ENCODE measurements at regions of chr7 and their contacts with region 1.

Region 1: GRCh38 chr7:5237286-5237685 is 45.5 kb upstream of the SLC29A4 start:
- DNase-seq: no peak
- ATAC-seq: no peak
- H3K4me3 ChIP-seq: no peak overlapping the region
- H3K27ac ChIP-seq: no peak overlapping the region
- H3K4me1 ChIP-seq: peaks cover 9% of the 10 kb centered on the region
- H3K27me3 ChIP-seq: no peaks in the 10 kb centered on the region
- CTCF ChIP-seq: no peak

Region 2: DNA sequence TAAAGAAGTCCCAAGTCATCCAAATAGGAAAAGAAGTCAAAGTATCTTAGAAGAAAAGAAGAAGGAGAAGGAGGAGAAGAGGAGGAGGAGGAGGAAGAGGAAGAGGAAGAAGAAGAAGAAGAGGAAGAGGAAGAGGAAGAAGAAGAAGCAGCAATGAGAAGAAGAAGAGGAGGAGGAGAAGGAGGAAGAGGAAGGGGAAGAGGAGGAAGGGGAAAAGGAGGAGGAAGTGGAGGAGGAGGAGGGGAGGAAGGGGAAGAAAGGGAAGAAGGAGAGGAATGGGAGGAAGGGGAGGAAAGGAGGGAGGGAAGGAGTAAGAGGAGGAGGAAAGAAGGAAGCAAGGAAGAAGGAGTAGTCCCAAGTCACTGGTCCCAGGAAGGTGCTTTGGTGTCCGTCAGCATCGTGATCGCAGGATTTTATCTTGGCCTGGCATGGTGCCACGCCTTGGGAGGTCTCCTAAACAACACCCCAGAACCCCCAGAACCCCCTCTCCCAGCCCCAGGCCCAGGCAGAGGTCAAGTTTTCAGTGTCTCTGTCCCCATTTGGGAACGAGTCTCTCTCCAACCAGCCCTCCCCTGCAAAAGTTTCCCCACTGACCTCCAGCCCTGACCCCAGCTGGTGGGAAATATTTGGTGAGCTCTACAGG is 332.0 kb before region 1 on chr7:
- CTCF ChIA-PET with region 1: no interaction called
- POLR2A ChIA-PET with region 1: no interaction called
- intact Hi-C with region 1: no loop called
- DNase-seq: no peak
- ATAC-seq: no peak
- H3K4me3 ChIP-seq: no peak overlapping the region
- H3K27ac ChIP-seq: no peak overlapping the region
- H3K4me1 ChIP-seq: no peaks in the 10 kb centered on the region
- H3K27me3 ChIP-seq: peaks cover 10% of the 10 kb centered on the region
- CTCF ChIP-seq: no peak

Region 3: DNA sequence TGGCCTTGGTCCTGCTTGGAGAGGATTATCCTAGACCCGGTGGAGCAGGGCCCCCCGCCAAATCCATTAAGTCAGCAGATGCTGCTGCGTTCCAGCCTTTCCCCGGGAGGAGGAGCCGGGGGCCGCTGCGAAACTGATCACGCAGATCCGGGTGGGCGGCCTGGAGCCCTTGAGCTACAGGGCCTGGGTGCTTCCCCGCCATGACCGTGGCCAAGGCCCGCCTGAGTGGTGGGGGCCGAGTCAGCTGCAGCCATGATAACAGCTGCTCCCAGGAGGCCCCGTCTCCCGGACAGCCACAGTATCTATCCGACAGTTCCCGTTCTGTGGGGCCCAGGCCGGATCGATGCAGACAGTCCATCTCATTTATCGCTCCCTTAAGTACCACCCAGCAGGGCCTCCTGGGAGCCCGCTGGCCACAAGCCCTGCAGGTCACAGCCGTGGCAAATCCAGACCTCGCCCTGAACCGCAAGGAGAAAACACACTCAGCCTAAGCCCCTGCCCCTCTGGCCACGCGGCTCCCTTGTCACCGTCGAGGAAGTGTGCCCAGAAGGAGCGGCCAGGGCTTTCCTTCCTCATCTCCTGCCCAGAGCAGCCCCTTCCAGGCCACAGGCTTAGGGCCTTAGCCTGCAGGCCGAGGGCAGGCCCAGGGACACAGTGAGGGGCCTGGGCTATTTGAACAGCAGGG is 11.1 kb after region 1 on chr7:
- CTCF ChIA-PET with region 1: no interaction called
- POLR2A ChIA-PET with region 1: no interaction called
- intact Hi-C with region 1: no loop called
- DNase-seq: no peak
- ATAC-seq: no peak
- H3K4me3 ChIP-seq: no peak overlapping the region
- H3K27ac ChIP-seq: no peak overlapping the region
- H3K4me1 ChIP-seq: no peaks in the 10 kb centered on the region
- H3K27me3 ChIP-seq: no peaks in the 10 kb centered on the region
- CTCF ChIP-seq: no peak

Region 4: GRCh38 chr7:5303591-5304505 is 66.6 kb after region 1 on chr7:
- CTCF ChIA-PET with region 1: no interaction called
- POLR2A ChIA-PET with region 1: no interaction called
- intact Hi-C with region 1: loop called (anchors 2 kb)
- DNase-seq: no peak
- ATAC-seq: no peak; the same call in 1 of the 2 replicates
- H3K4me3 ChIP-seq: no peak overlapping the region
- H3K27ac ChIP-seq: no peak overlapping the region
- H3K4me1 ChIP-seq: no peaks in the 10 kb centered on the region
- H3K27me3 ChIP-seq: no peaks in the 10 kb centered on the region
- CTCF ChIP-seq: no peak

Region 5: GRCh38 chr7:5363729-5364128 is 126.4 kb after region 1 on chr7:
- CTCF ChIA-PET with region 1: interaction called, 15 read pairs
- POLR2A ChIA-PET with region 1: no interaction called
- intact Hi-C with region 1: loop called (anchors 2 kb)
- DNase-seq: no peak
- ATAC-seq: no peak
- H3K4me3 ChIP-seq: no peak overlapping the region
- H3K27ac ChIP-seq: no peak overlapping the region
- H3K4me1 ChIP-seq: no peaks in the 10 kb centered on the region
- H3K27me3 ChIP-seq: no peaks in the 10 kb centered on the region
- CTCF ChIP-seq: no peak

Region 6: GRCh38 chr7:5450549-5451372 is 213.5 kb after region 1 on chr7:
- CTCF ChIA-PET with region 1: interaction called, 3 read pairs
- POLR2A ChIA-PET with region 1: no interaction called
- intact Hi-C with region 1: loop called (anchors 1 kb)
- DNase-seq: peak; percentile 32
- ATAC-seq: peak; percentile 67
- H3K4me3 ChIP-seq: no peak overlapping the region
- H3K27ac ChIP-seq: no peak overlapping the region
- H3K4me1 ChIP-seq: no peaks in the 10 kb centered on the region
- H3K27me3 ChIP-seq: no peaks in the 10 kb centered on the region
- CTCF ChIP-seq: peak; percentile 77